Activated T-helper 2 cell treated with anti-CD3 and anti-CD28 coated beads, Interferon-gamma antibody, Interleukin-2, Interleukin-4, amounts not matched to agents 10 μg/mL and 5 μg/mL and 100 μg/mL, durations not matched to agents 14 hours and 24 hours and 36 hours (primary cell): ENCODE measurements at regions of chr12 and their contacts with region 1.

Region 1: GRCh38 chr12:106223485-106224354 is 24.1 kb downstream of the CKAP4 start:
- DNase-seq: peak; percentile 65
- H3K4me3 Mint-ChIP-seq: no peak overlapping the region
- H3K27ac Mint-ChIP-seq: no peak overlapping the region
- H3K4me1 Mint-ChIP-seq: peaks cover 21% of the 10 kb centered on the region
- H3K27me3 Mint-ChIP-seq: peaks cover 6% of the 10 kb centered on the region

Region 2: DNA sequence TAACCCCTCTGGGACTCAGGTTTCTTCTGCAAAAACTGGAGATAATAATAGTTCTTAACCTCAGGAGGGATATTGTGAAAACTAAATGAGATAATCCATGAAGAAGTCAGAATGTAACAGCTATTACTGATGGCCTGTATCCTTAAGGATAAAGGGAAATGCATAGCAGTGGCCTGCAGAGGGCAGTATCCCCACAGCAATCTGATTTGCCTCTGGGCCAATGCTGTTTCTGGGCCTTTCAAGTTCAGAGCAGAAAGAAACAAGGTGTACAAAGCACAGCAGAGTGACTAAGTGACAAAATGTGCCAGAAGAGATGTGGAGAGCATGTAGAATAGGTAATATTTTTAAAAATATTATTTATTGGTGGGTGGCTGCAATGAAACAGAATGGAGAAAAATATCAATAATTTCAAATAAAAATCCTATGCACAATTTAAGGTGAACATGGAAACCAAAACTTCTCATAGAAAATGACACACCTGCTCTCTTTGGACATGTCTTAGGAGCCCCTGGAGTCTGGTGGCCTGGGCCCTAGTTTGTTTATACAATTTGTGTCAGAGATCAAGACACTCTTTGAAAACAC is 803.0 kb before region 1 on chr12:
- intact Hi-C with region 1: loop called (anchors 1 kb)
- DNase-seq: peak; percentile 33
- H3K4me3 Mint-ChIP-seq: no peak overlapping the region
- H3K27ac Mint-ChIP-seq: no peak overlapping the region
- H3K4me1 Mint-ChIP-seq: peaks cover 7% of the 10 kb centered on the region
- H3K27me3 Mint-ChIP-seq: peaks cover 11% of the 10 kb centered on the region

Region 3: DNA sequence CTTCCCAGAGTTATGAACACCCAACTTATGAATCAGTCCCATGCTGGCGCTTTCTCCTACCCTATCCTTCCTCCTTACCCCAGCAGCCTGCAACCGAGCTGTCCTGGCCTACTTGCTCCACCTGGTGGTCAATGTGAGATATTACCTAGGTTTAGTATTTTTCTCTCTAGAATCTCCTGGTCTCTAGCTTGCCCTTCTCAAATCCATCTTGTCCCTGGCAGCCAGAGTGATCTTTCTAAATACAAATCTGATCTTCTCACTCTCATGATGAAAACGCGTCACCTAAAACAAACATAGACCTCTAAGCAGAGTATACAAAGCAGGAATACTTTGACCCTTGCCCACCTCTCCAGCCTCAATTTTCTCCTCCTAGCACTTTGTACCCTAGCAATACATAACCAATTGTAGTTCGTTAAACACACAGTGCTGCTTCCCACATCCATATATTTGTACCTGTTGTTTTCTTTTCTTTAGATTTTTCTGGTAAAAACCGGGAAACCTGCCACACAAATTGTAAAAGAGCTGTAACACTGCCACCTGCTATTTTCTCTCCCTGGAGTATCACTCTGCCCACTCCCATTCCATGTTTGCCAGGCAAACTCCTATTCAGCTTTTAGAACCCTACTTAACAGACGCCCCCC is 58.9 kb after region 1 on chr12:
- intact Hi-C with region 1: loop called (anchors 1 kb)
- DNase-seq: peak; percentile 18
- H3K4me3 Mint-ChIP-seq: no peak overlapping the region
- H3K27ac Mint-ChIP-seq: no peak overlapping the region
- H3K4me1 Mint-ChIP-seq: peaks cover 10% of the 10 kb centered on the region
- H3K27me3 Mint-ChIP-seq: peaks cover 24% of the 10 kb centered on the region

Region 4: DNA sequence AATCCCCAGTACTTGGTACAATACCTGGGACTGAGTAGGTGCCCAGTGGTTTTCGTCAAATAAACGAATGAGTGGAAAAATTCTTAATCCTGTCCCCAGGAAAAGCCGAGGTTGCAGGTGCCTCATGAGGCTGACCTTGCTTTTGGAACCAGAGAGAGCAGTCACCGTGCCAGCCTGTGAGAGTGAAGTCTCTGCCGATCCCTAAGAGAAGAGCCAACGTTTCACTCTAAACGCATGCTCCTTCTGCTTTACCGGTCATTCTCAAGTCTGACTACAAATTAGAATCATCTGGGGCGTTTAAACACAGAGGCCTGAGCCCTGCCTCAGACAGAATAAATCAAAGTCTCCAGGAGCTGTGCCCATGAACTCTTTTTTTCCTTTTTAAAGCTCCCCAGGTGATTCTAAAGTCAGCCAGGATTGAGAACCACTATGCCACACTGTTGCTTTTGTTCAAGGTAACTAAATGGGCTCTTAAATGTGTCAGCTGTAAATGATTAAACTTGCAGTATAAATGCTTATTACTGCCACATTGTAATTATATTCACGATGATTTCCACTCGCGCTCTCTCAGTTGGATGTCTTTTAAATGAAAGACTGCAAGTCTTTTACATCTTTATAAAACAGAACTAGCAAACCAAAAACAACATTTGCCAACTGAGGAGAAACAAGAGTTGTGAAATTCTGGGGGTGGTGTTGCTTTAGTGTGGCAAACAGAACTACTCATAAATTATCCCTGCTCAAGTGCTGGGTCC is 105.7 kb after region 1 on chr12:
- intact Hi-C with region 1: no loop called
- DNase-seq: no peak
- H3K4me3 Mint-ChIP-seq: no peak overlapping the region
- H3K27ac Mint-ChIP-seq: no peak overlapping the region
- H3K4me1 Mint-ChIP-seq: no peaks in the 10 kb centered on the region
- H3K27me3 Mint-ChIP-seq: no peaks in the 10 kb centered on the region